MCF 10A (cell line): ENCODE measurements at regions of chr4 and their contacts with region 1.

Region 1: GRCh38 chr4:185811509-185812364 is at the start of gene SORBS2:
- DNase-seq: peak; percentile 43
- H3K4me3 Mint-ChIP-seq: peak within 1 kb of the TSS; percentile 77
- H3K27ac Mint-ChIP-seq: peak within 1 kb of the TSS; percentile 79
- H3K4me1 Mint-ChIP-seq: peaks cover 13% of the 10 kb centered on the region
- H3K27me3 Mint-ChIP-seq: no peaks in the 10 kb centered on the region
- CTCF ChIP-seq: no peak
- total RNA-seq, gene SORBS2: 19.3 and 29.1 TPM in 2 replicates

Region 2: DNA sequence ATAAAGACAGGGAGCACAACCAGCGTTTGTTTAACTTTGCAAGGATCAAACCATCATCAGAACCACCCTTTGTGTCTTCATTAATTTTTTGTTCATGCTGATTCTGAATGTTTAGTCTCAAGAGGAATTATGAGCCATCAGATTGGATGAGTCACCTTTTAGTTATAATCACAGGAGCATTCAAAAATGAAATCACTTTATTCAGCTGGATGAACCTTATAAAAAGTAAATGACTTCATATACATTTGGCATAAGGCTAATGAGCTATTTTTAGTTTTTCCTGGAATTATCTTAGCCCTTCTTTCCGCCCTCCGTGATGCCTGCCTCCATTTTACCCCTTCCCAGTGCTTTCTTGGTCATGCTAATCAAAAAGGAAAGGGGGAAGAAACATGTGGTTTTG is 103.4 kb before region 1 on chr4:
- CTCF ChIA-PET with region 1: no interaction called
- POLR2A ChIA-PET with region 1: interaction called, 52 read pairs
- intact Hi-C with region 1: no loop called
- DNase-seq: peak; percentile 44
- H3K4me3 Mint-ChIP-seq: no peak overlapping the region
- H3K27ac Mint-ChIP-seq: peak overlapping the region; percentile 88
- H3K4me1 Mint-ChIP-seq: peaks cover 50% of the 10 kb centered on the region
- H3K27me3 Mint-ChIP-seq: no peaks in the 10 kb centered on the region
- CTCF ChIP-seq: no peak

Region 3: DNA sequence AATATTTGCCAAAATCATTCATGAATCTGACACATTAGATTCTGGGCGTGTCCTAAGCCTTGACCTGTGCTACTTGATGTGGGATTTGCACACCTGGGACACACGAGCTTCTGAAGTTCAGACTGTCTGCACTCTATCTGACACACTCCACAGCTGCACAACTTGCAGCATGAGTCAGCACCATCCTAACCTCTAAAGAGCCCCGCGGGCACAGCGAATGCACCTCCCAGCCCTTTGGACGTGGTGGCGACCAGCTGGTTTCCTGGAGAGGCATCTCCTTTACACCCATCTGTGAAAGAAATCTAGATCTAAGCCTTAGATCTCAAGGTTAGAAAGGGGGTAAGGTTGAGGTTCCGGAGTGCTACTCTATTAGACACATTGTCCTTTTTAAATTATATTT is 69.0 kb before region 1 on chr4:
- CTCF ChIA-PET with region 1: no interaction called
- POLR2A ChIA-PET with region 1: interaction called, 11 read pairs
- intact Hi-C with region 1: no loop called
- DNase-seq: peak; percentile 84
- H3K4me3 Mint-ChIP-seq: peak overlapping the region; percentile 35
- H3K27ac Mint-ChIP-seq: peak overlapping the region; percentile 19
- H3K4me1 Mint-ChIP-seq: peaks cover 40% of the 10 kb centered on the region
- H3K27me3 Mint-ChIP-seq: no peaks in the 10 kb centered on the region
- CTCF ChIP-seq: no peak

Region 4: DNA sequence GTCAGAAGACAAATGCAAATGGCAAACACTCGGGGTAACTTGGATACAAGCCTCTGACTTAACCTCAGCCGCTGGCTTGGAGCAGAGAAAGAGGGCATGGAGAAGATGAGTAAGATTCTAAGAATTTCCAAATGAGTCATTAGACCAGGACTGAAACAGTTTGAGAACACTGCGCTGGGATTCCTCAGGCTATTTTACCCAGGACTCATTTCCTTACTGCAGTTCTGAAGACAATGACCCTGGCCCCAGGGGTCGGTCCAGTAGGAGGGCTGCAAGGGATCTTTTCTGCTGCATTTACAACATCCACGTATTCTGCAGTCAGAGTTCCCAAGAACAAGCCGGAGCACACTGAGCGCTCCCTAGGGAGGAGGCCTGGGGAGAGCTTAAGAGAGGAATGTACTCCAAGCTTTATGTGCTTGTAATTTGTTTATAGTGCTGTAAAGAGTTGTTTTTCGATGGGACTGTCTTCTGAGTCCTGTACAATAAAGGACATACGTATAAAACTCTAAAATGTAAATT is 27.5 kb after region 1 on chr4:
- CTCF ChIA-PET with region 1: no interaction called
- POLR2A ChIA-PET with region 1: interaction called, 29 read pairs
- intact Hi-C with region 1: no loop called
- DNase-seq: peak; percentile 92
- H3K4me3 Mint-ChIP-seq: no peak overlapping the region
- H3K27ac Mint-ChIP-seq: no peak overlapping the region
- H3K4me1 Mint-ChIP-seq: no peaks in the 10 kb centered on the region
- H3K27me3 Mint-ChIP-seq: no peaks in the 10 kb centered on the region
- CTCF ChIP-seq: no peak